Breast epithelium (tissue), 4 donors: ENCODE measurements at regions of chr16 and their contacts with region 1.

Region 1: DNA sequence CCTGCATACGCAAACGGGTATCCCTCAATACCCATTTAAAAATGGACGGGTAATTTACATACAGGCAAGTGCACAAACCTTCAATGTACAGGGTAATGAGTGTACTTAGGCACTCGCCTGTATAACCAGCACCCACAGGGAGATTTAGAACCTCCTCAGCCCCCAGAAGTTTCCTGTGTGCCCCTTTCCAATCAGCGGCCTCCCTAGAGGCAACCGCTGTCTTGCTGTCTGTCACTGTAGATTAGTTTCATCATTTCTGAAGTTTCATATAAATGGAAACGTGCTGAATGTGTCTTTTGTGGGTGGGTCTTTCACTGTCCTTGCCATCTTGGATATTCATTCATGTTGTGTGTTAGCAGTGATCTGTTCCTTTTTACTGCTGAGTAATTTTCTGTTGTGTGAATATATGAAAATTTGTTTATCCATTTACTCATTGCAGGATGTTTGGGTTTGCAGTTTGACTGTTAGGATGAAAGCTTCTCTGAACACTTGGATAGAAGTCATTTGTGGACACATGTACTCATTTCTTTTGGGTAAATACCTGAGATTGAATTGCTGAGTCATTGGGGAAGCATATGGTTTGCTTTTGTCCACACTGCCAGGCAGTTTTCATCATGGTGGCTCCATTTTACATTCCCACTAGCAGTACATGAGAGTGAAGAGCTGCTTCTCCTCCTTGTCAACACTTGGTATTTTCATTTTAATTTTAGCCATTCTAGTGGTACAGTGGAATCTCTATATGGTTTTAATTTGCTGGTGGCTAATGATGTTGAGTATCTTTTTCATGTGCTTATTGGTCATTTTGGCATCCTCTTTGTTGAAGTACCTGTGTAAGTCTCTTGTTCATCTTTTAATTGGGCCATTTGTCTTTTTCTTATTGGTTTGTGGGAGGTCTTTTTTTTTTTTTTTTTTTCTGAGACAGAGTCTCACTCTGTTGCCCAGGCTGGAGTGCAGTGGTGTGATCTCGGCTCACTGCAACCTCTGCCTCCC is 2.1 kb upstream of the ADCY7 start:
- DNase-seq: no peak
- H3K4me3 ChIP-seq: no peak overlapping the region
- H3K27ac ChIP-seq: no peak overlapping the region
- H3K4me1 ChIP-seq: no peaks in the 10 kb centered on the region
- H3K27me3 ChIP-seq: no peaks in the 10 kb centered on the region
- CTCF ChIP-seq: no peak
- POLR2A ChIP-seq: no peak

Region 2: GRCh38 chr16:49168126-49168525 is 1096.1 kb before region 1 on chr16:
- intact Hi-C with region 1: no loop called
- DNase-seq: no peak
- H3K4me3 ChIP-seq: no peak overlapping the region
- H3K27ac ChIP-seq: no peak overlapping the region
- H3K4me1 ChIP-seq: no peaks in the 10 kb centered on the region
- H3K27me3 ChIP-seq: peaks cover 0 to 4% of the 10 kb centered on the region in 2 donors
- CTCF ChIP-seq: no peak
- POLR2A ChIP-seq: no peak

Region 3: DNA sequence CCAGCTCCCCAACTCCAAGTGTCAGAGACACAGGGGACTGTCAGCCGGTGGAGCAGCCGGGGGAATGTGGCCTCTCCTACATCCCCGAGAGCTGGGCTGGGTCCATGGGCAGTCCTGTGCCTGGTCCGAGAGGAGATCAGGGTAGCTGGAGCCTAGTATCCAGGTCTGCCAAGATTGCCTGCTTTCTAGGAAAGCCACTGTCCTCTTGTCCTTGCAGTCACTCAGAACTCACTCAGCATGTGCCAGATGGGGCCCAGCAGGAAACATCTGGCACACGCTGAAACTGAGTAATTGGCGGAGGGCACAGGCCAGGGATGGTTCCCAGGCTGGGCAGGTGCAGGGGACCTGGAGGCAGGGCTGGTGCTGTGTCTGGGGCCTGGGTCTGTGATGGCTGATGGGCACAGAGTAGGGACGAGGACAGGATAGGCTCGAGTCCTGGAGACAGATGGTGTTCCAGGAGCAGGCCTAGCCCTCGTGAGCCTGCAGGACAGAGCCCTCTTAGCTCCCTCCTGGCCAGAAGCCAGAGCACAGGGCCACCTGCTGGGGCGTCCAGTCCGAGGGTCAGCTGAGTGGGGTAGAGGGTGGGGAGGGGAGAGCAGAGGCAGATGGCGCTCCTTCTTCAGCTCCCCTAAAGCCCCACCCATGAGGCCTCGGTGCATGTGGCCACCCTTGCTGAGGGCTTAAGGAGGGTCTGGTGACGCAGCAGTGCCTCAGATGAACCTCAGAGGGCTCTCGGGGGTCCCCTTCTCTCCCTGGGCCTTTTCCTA is 33.2 kb after region 1 on chr16:
- intact Hi-C with region 1: loop called (anchors 2 kb)
- DNase-seq: no peak
- H3K4me3 ChIP-seq: no peak overlapping the region
- H3K27ac ChIP-seq: no peak overlapping the region
- H3K4me1 ChIP-seq: no peaks in the 10 kb centered on the region
- H3K27me3 ChIP-seq: no peaks in the 10 kb centered on the region
- CTCF ChIP-seq: no peak
- POLR2A ChIP-seq: no peak

Region 4: DNA sequence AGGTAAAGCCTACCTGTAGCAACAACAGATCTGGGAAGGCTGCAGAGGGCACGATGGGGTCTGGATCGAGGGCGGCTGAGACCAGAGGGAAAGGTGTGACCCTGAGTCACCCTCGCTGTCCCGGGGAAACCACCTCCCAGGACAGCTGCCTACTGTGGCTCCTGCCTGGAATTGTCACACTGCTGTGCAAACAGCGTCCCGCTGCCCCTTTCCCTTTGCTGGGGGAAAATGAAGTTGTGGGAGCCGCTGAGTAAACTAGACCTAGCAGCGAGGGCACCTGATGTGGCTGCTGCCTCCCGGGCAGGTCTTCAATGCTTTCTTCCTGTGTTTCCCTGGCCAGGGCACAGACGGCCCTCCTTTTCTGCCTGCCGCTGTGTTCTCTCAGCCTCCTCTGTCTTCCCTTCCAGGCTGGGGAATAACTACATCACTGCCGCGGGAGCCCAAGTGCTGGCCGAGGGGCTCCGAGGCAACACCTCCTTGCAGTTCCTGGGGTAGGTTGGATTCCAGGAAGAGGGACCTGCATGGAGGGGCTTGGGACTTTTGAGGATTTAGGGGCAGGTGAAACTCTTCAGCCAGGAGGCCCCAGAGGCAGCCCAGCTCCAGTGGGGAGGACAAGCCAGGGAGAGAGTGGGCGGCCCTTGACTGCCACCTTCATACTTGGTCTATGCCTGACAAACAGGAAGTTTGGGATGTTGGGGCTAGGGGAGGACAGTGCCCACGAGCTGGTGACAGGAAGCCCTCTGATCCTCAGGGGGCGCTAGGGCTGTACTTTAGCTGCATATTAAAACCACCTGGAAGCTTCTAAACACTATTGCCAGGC is 455.5 kb after region 1 on chr16:
- intact Hi-C with region 1: no loop called
- DNase-seq: peak in 1 of 2 donors; percentile 37
- H3K4me3 ChIP-seq: peak overlapping the region in 2 of 3 donors; percentile 6 to 23
- H3K27ac ChIP-seq: peak overlapping the region; percentile 81 to 83
- H3K4me1 ChIP-seq: no peaks in the 10 kb centered on the region
- H3K27me3 ChIP-seq: no peaks in the 10 kb centered on the region
- CTCF ChIP-seq: no peak
- POLR2A ChIP-seq: no peak